Dendritic cell treated with granulocyte-macrophage colony-stimulating factor and Interleukin-4, amounts not matched to agents 40 ng/mL and 50 ng/mL, for 4 days (primary cell): ENCODE measurements at regions of chr5 and their contacts with region 1.

Region 1: GRCh38 chr5:157142317-157143126 is at the start of gene MED7:
- H3K4me3 Mint-ChIP-seq: peak within 1 kb of the TSS; percentile 91
- H3K27ac Mint-ChIP-seq: peak within 1 kb of the TSS; percentile 100
- H3K4me1 Mint-ChIP-seq: peaks cover 38% of the 10 kb centered on the region
- H3K27me3 Mint-ChIP-seq: peaks cover 5% of the 10 kb centered on the region

Region 2: DNA sequence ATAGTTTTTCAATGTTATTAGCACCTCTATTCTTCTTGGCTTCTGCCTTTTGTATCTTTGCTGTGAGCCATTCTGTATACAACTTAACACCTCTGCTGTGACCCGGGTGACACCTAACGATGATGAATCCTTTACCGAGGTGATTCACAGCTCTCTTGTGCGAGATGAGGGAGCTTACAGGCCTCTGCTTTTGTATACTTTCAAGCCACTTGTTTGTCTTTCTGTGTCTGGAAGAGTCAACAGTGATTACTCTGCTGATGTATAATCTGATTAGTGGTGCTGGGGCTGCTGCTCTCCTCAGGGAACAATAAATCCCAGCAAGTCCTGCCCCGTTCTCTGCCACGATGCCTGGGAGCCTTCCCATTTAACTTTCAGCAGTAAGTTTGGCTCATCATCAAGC is 1258.5 kb before region 1 on chr5:
- intact Hi-C with region 1: no loop called
- H3K4me3 Mint-ChIP-seq: no peak overlapping the region
- H3K27ac Mint-ChIP-seq: no peak overlapping the region
- H3K4me1 Mint-ChIP-seq: no peaks in the 10 kb centered on the region
- H3K27me3 Mint-ChIP-seq: no peaks in the 10 kb centered on the region

Region 3: DNA sequence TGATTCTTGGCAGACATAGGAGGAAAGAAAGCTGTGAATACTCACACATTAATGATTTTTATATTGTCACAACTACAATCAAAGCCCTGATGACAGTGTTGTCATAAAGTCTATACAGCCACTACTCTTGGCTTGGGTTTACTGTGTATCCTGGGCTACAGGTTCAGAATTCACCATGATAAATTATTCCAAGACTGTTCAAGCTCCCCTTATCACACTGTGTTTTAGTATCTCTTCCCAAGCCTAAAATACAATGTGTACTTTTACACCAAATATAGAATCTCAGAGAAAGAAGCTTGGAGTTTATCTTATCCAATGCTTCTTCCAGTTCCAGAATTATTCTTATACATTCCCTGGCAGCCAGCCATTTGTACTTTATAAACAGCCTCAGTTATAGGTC is 420.2 kb before region 1 on chr5:
- intact Hi-C with region 1: no loop called
- H3K4me3 Mint-ChIP-seq: no peak overlapping the region
- H3K27ac Mint-ChIP-seq: no peak overlapping the region
- H3K4me1 Mint-ChIP-seq: no peaks in the 10 kb centered on the region
- H3K27me3 Mint-ChIP-seq: no peaks in the 10 kb centered on the region

Region 4: DNA sequence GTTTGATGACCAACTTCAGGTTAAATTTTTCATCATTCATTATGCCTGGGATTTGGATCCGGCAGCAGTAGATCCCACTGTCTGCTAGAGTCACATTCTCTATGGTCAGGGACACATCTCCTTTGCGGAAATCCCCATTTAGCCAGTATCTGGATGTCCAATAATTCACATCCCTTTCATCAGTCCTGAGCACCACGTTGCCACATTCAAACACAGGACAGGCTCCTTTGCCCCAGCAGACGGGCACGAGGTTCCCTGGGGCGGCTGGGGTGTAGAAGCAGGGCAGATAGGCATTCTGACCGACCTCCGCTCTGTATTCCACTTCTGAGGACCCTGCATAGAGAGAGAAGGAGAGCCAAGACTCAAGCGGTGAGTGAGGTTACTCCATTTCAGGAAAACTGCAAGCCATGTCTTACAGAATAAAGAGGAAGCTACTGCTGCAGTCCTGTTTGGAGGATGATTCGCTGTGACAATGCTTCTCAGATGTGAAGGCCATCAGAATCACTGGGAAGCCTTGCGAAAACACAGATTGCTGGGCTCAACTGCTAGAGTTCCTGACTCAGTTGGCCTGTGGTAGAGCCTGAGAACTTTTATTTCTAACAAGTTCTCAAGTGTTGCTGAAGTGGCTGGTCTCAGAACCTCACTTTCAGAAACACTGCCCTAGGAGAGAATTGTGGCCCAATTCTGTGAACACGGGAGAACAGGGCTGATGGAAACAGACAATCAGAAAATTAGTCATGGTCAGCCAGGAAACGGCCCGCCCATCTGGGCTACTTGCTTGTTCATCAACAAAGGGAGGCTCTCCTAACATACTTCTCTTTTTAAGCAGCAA is 35.7 kb before region 1 on chr5:
- intact Hi-C with region 1: loop called (anchors 2 kb)
- H3K4me3 Mint-ChIP-seq: peak overlapping the region; percentile 92
- H3K27ac Mint-ChIP-seq: peak overlapping the region; percentile 96
- H3K4me1 Mint-ChIP-seq: peaks cover 41% of the 10 kb centered on the region
- H3K27me3 Mint-ChIP-seq: no peaks in the 10 kb centered on the region

Region 5: DNA sequence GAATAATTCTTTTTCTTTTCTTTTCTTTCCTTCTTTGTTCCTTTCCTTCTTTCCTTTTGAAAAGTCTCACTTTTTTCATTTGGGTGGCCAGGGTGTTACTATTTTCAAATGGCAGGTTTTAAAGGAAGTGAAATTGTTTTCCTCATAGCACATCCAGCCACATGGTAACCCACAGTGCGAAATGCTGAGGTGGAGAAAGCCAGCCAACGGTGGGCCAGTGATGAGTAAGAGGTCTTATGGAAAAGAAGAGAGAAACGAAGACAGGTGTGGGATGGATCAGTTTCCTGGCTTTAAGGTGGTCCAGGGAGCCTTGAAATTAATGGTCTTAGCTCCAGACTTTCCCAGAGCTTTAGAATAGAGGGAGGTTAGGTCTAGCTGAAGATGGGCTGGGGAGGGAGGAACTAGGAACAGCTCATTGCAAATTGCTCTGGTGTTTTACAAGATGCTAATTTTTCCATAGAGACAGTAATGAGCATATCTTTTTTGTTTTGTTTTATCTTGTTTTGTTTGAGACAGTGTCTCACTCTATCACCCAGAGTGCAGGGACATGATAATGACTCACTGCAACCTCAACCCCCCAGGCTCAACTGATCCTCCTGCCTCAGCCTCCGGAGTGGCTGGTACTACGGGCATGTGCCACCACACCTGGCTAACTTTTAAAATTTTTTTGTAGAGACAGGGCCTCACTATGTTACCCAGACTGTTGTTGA is 55.9 kb after region 1 on chr5:
- intact Hi-C with region 1: no loop called
- H3K4me3 Mint-ChIP-seq: no peak overlapping the region
- H3K27ac Mint-ChIP-seq: no peak overlapping the region
- H3K4me1 Mint-ChIP-seq: peaks cover 9% of the 10 kb centered on the region
- H3K27me3 Mint-ChIP-seq: peaks cover 14% of the 10 kb centered on the region

Region 6: GRCh38 chr5:157323107-157323706 is 180.7 kb after region 1 on chr5:
- intact Hi-C with region 1: no loop called
- H3K4me3 Mint-ChIP-seq: no peak overlapping the region
- H3K27ac Mint-ChIP-seq: no peak overlapping the region
- H3K4me1 Mint-ChIP-seq: peaks cover 3% of the 10 kb centered on the region
- H3K27me3 Mint-ChIP-seq: no peaks in the 10 kb centered on the region